ENCODE measurements at regions of chr1 and their contacts with region 1.

Region 1: DNA sequence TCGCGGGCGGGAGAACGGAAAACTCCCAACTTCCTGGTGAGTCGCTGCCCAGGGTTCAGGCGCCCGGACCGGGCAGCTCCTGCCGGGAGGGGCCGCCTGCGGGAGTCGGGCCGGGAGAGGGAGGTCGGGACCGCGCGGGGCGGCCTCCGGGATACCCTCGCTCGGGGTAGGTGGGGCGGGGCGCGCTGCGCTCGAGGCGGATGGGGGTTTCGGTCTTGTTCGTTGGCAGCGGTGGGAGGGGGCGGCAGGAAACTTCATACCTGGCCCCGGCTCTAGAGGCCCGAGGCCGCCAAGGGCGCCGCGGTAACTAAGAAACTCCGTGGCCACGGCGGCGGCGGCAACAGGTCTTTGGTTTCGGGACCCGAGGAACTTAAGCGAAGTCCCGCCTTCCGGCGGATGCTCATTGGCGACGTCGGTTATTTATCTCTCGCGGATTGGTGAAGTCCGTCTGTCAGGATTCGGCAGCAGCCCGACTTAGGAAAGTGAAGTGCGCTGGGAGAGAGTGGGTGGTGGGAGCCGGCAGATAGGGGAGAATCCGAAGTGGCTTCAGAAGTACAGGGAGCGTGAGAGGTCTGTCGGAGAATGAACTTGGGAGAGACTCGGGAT is 546 bp downstream of the NEK7 start:
- DNase-seq: peak; percentile 62 to 93 (median 75)
- ATAC-seq: peak; percentile 45
- H3K4me3 ChIP-seq: peak overlapping the region; percentile 87
- H3K4me3 Mint-ChIP-seq: peak overlapping the region; percentile 97
- H3K27ac ChIP-seq: peak overlapping the region; percentile 86 to 95
- H3K27ac Mint-ChIP-seq: peak overlapping the region; percentile 98
- H3K4me1 ChIP-seq: peaks cover 23% of the 10 kb centered on the region
- H3K4me1 Mint-ChIP-seq: peaks cover 54% of the 10 kb centered on the region
- H3K27me3 ChIP-seq: no peaks in the 10 kb centered on the region
- H3K27me3 Mint-ChIP-seq: no peaks in the 10 kb centered on the region
- CTCF ChIP-seq: no peak

Region 2: GRCh38 chr1:197541411-197541810 is 615.9 kb before region 1 on chr1:
- CTCF ChIA-PET with region 1: no interaction called
- POLR2A ChIA-PET with region 1: no interaction called
- intact Hi-C with region 1: no loop called
- DNase-seq: no peak
- ATAC-seq: no peak
- H3K4me3 ChIP-seq: no peak overlapping the region
- H3K4me3 Mint-ChIP-seq: no peak overlapping the region
- H3K27ac ChIP-seq: no peak overlapping the region
- H3K27ac Mint-ChIP-seq: no peak overlapping the region
- H3K4me1 ChIP-seq: no peaks in the 10 kb centered on the region
- H3K4me1 Mint-ChIP-seq: no peaks in the 10 kb centered on the region
- H3K27me3 ChIP-seq: no peaks in the 10 kb centered on the region
- H3K27me3 Mint-ChIP-seq: no peaks in the 10 kb centered on the region
- CTCF ChIP-seq: no peak

Region 3: DNA sequence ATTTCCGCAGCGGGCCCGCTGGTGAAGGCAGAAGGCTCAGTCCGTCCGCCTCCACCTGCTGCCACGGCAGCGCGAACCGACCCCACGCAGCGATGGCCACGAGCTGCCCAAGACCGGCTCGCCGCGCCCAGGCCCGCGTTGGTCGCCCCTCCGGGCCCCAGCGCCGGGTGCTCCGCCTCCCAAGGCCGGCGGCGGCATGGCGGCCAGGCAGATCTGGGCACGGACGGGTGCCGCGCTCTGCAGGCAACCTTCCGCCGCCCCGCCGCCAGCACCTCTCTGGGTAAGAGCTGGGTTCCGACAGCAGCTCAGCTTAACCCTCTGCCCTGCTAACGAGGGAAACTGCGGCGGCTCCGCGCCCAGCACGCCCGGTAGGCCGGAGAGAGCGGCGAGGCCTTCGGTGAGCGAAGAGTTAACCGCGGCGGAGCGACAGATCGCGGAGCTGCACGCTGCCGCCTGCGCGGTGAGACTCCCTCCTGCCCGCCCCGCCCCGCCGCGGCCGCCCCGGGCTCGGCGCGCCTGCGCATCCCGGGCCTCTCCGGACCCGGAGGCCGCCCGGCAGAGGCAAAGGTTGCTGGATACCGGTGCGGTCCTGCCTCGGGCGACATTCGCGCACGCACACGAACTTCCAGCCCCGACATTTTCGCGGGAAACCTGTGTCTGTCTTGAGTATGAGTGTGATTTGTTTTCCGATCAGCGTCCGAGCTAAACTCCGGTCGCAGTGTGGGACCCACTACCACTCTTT is 254.7 kb before region 1 on chr1 and contains the start of gene C1orf53:
- CTCF ChIA-PET with region 1: no interaction called
- POLR2A ChIA-PET with region 1: interaction called, 3 read pairs
- intact Hi-C with region 1: loop called in 1 of 2 experiments (anchors 10 kb)
- DNase-seq: peak; percentile 40 to 87 (median 66)
- ATAC-seq: peak; percentile 89
- H3K4me3 ChIP-seq: peak within 1 kb of the TSS; percentile 59
- H3K4me3 Mint-ChIP-seq: peak within 1 kb of the TSS; percentile 97
- H3K27ac ChIP-seq: peak within 1 kb of the TSS in 1 of 2 donors; percentile 30
- H3K27ac Mint-ChIP-seq: peak within 1 kb of the TSS; percentile 79
- H3K4me1 ChIP-seq: peaks cover 11% of the 10 kb centered on the region
- H3K4me1 Mint-ChIP-seq: peaks cover 14% of the 10 kb centered on the region
- H3K27me3 ChIP-seq: peaks cover 18 to 48% of the 10 kb centered on the region in 2 experiments
- H3K27me3 Mint-ChIP-seq: peaks cover 54% of the 10 kb centered on the region
- CTCF ChIP-seq: no peak
- total RNA-seq, gene C1orf53: not detected

Region 4: DNA sequence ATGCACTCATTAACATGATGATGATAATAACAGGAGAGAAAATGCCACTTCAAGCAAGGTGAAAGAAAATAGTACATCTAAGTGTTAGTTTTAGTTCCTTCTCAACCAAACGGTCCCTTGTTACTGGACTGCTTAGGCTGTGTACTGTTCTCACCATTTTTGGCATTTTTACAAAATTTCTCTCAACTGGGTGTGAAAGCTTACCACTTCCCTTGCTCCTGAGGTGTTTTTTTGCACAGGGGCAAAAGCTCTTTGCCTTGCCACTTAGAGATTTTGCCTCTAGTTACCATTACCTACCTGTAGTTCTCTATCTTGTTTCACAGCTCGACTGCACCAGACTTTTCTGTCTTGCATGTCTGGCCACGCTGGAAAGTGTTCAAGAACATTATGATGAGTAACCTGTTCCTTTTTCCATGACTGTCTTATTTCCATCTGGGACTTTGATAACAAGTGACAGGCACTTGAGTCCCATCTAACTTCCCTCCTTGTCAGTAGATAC is 10.1 kb after region 1 on chr1:
- CTCF ChIA-PET with region 1: interaction called, 18 read pairs
- POLR2A ChIA-PET with region 1: interaction called, 160 read pairs
- intact Hi-C with region 1: loop called in 1 of 2 experiments (anchors 1 kb)
- DNase-seq: peak in 5 of 14 experiments; percentile 16 to 85 (median 63)
- ATAC-seq: peak; percentile 48
- H3K4me3 ChIP-seq: peak overlapping the region; percentile 24
- H3K4me3 Mint-ChIP-seq: peak overlapping the region; percentile 74
- H3K27ac ChIP-seq: peak overlapping the region; percentile 57 to 79
- H3K27ac Mint-ChIP-seq: peak overlapping the region; percentile 88
- H3K4me1 ChIP-seq: peaks cover 64% of the 10 kb centered on the region
- H3K4me1 Mint-ChIP-seq: peaks cover 91% of the 10 kb centered on the region
- H3K27me3 ChIP-seq: no peaks in the 10 kb centered on the region
- H3K27me3 Mint-ChIP-seq: no peaks in the 10 kb centered on the region
- CTCF ChIP-seq: no peak

Region 5: GRCh38 chr1:198187973-198188588 is 30.7 kb after region 1 on chr1:
- CTCF ChIA-PET with region 1: interaction called, 4 read pairs
- POLR2A ChIA-PET with region 1: interaction called, 7 read pairs
- intact Hi-C with region 1: loop called (anchors 2 to 5 kb)
- DNase-seq: peak in 9 of 14 experiments; percentile 13 to 76 (median 22)
- ATAC-seq: peak; percentile 86
- H3K4me3 ChIP-seq: peak overlapping the region; percentile 8
- H3K4me3 Mint-ChIP-seq: peak overlapping the region; percentile 44
- H3K27ac ChIP-seq: peak overlapping the region; percentile 60 to 64
- H3K27ac Mint-ChIP-seq: peak overlapping the region; percentile 81
- H3K4me1 ChIP-seq: peaks cover 30% of the 10 kb centered on the region
- H3K4me1 Mint-ChIP-seq: peaks cover 88% of the 10 kb centered on the region
- H3K27me3 ChIP-seq: no peaks in the 10 kb centered on the region
- H3K27me3 Mint-ChIP-seq: no peaks in the 10 kb centered on the region
- CTCF ChIP-seq: no peak

Region 6: DNA sequence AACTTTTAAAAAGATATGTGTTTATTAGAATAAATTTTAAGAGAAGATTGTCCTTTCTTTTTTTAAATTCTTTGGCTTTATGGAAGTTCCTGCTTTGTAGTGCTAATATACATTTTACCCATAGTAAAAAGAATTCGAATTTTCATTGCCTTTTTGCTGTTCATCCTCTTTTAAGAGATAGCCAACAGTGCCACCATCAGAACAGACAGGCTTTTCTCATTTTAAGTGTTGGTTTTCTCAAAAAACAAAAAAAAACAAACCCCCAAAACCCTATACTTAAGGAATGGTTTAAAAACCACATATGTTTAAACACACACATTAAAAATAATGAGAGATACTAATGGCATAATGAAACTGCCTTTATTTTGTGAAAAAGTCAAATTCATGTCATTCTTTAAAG is 118.3 kb after region 1 on chr1:
- CTCF ChIA-PET with region 1: no interaction called
- POLR2A ChIA-PET with region 1: no interaction called
- intact Hi-C with region 1: loop called in 1 of 2 experiments (anchors 5 kb)
- DNase-seq: peak in 1 of 14 experiments; percentile 10
- ATAC-seq: no peak
- H3K4me3 ChIP-seq: no peak overlapping the region
- H3K4me3 Mint-ChIP-seq: no peak overlapping the region
- H3K27ac ChIP-seq: no peak overlapping the region
- H3K27ac Mint-ChIP-seq: no peak overlapping the region
- H3K4me1 ChIP-seq: no peaks in the 10 kb centered on the region
- H3K4me1 Mint-ChIP-seq: peaks cover 16% of the 10 kb centered on the region
- H3K27me3 ChIP-seq: no peaks in the 10 kb centered on the region
- H3K27me3 Mint-ChIP-seq: no peaks in the 10 kb centered on the region
- CTCF ChIP-seq: no peak

Region 7: GRCh38 chr1:198771563-198772153 is 614.3 kb after region 1 on chr1:
- CTCF ChIA-PET with region 1: no interaction called
- POLR2A ChIA-PET with region 1: no interaction called
- intact Hi-C with region 1: no loop called
- DNase-seq: peak in 3 of 14 experiments; percentile 26 to 51 (median 51)
- ATAC-seq: no peak
- H3K4me3 ChIP-seq: no peak overlapping the region
- H3K4me3 Mint-ChIP-seq: no peak overlapping the region
- H3K27ac ChIP-seq: no peak overlapping the region
- H3K27ac Mint-ChIP-seq: no peak overlapping the region
- H3K4me1 ChIP-seq: peaks cover 3% of the 10 kb centered on the region
- H3K4me1 Mint-ChIP-seq: peaks cover 5% of the 10 kb centered on the region
- H3K27me3 ChIP-seq: no peaks in the 10 kb centered on the region
- H3K27me3 Mint-ChIP-seq: no peaks in the 10 kb centered on the region
- CTCF ChIP-seq: peak; percentile 52